Activated CD4-positive, alpha-beta memory T cell treated with anti-CD3 and anti-CD28 coated beads, Interleukin-2, amount 10 ng/mL, durations not matched to agents 7 days and 5 days (primary cell): ENCODE measurements at regions of chr3 and their contacts with region 1.

Region 1: DNA sequence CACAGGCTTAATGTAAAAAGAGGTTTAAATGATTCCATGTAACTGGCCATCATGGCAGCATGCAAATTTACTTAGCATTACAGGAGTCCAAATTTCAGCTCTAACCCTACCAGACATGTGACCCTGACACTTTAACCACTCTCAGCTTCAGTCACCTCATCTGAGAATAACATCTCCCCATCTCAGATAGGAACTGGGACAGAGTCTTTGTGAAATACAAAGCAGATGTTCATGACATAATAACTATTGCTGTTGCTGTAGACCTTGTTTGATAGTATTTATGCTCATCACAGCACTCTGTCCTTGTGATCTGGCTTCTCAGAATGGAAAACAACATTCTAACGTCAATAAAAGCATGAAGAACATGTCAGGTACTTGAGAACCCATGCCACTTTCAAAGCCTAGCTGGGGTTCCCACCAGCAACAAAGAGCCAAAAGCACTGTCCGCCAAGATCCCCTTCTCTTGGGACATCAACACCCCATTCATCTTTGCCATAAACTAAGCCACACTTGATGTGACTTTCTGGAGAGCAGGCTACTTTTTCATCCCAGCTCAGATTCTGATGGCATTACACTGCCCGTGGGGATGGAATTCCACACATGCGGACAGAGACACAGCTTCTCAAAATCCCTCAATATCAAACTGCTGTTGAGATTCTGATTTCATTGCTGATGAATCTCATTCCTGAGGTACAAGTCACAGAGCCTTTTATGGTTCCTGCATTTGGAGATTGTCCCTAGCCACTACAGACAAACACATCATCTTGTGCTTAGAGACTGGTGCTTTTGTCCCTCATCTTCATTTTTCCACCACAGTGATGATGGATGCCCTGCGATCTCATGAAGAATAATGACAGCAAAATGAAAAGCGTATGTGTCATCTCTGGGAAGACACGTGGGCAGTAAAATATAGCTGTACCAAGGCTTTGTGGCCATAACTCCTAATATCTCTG is 202.7 kb downstream of the TNIK start:
- DNase-seq: no peak
- H3K4me3 Mint-ChIP-seq: no peak overlapping the region
- H3K27ac Mint-ChIP-seq: peak overlapping the region; percentile 97
- H3K4me1 Mint-ChIP-seq: peaks cover 81% of the 10 kb centered on the region
- H3K27me3 Mint-ChIP-seq: no peaks in the 10 kb centered on the region

Region 2: GRCh38 chr3:171269542-171269941 is 12.0 kb after region 1 on chr3:
- CTCF ChIA-PET with region 1: interaction called, 6 read pairs
- POLR2A ChIA-PET with region 1: interaction called, 59 read pairs
- DNase-seq: no peak
- H3K4me3 Mint-ChIP-seq: peak overlapping the region; percentile 47
- H3K27ac Mint-ChIP-seq: peak overlapping the region; percentile 52
- H3K4me1 Mint-ChIP-seq: peaks cover 67% of the 10 kb centered on the region
- H3K27me3 Mint-ChIP-seq: no peaks in the 10 kb centered on the region